ENCODE measurements at regions of chr14 and their contacts with region 1.

Region 1: DNA sequence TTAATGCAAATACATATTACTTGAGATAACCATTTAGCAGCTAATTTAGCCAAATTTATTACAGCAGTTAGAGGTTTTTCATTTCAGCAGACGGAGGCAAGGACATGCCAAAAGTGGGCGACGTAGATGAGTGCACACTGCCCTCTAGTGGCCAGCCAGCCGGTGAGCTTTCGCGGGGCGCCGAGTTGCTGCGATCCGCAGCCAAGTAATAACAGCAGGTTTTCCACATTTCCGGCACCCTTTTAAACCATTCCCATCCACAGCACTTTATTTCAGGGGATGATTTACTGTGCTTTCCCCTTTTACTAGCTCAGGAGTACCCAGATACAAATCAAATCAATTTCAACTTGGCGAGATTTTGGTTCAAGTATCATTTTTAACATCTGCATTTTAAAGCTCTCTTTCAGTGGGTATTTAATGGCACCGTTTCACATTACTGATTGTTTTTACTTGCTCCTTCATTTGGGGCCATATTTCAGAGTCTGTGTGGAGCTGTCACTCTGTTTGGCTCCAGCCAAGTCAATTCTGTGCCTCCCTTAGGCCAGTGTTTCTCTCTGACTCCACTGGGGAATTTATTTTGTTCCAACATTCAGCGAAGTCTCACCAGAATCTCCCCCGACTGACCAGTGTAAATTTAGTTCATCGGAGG is 158.0 kb downstream of the EGLN3 start:
- DNase-seq: peak; percentile 85
- ATAC-seq: peak; percentile 91
- H3K4me3 ChIP-seq: peak overlapping the region; percentile 55
- H3K27ac ChIP-seq: no peak overlapping the region
- H3K4me1 ChIP-seq: peaks cover 11% of the 10 kb centered on the region
- H3K27me3 ChIP-seq: no peaks in the 10 kb centered on the region
- CTCF ChIP-seq: peak; percentile 97

Region 2: DNA sequence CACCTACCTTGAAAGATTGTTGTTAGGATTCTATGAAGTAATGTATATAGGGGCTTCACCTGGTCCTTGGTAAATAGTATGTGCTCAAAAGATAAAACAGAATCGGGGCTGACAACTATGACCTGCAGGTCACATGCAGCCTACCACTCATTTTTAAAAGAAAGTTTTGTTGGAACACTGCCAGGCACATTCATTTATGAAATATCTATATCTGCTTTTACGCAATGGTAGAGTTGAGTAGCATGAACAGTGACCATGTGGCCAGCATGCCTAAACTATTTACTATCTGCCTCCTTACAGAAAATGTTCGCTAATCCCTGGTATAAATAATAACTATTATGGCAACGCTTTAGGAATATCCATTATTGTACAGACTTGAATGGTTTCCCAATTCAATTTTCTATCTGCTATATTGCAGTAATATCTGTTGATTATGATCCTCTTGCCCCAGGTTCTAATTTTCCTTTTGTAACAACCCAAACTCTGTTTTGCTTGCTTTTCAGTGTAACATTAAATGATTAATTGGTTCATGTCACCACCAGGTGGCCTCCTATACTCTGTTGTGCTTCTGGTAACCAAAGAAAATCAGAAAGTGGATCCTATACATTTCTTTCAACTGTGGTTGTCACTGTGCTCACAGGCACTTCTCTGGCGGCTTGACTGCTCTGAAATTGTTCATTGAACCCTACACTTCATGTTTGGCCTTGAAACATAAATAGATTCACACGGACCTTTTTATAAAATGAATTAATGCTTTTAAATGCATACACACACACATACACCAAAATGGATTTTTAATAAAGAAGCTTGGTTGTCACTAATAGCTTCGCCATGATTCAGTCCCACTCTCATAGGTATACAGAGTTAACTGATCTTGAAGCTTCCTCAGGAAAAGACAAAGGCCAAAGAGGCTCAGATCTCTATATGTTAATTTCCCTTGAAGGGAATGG is 1081.8 kb before region 1 on chr14:
- CTCF ChIA-PET with region 1: interaction called, 4 read pairs
- POLR2A ChIA-PET with region 1: no interaction called
- intact Hi-C with region 1: loop called (anchors 2 kb)
- DNase-seq: peak; percentile 73
- ATAC-seq: peak; percentile 87
- H3K4me3 ChIP-seq: no peak overlapping the region
- H3K27ac ChIP-seq: no peak overlapping the region
- H3K4me1 ChIP-seq: peaks cover 16% of the 10 kb centered on the region
- H3K27me3 ChIP-seq: no peaks in the 10 kb centered on the region
- CTCF ChIP-seq: peak; percentile 89

Region 3: DNA sequence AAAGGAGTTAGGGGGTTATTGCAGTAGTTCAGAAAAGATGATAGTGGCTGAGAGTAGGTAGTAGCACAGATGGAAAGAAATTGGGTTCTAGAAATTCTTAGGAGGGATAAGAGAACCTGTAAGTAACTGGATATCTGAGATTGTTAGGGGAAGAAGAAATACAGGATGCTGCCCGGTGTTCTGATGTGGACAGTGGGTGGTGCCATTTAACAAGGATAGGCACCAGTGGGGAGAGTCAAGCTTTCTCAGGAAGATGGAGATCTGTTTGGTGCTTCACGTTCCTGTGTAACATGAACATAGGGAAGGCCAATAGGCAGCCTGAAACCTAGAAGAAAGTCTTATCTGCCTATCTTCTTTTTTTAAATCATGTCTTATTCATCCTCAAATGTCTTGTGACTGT is 608.3 kb before region 1 on chr14:
- CTCF ChIA-PET with region 1: no interaction called
- POLR2A ChIA-PET with region 1: no interaction called
- intact Hi-C with region 1: loop called (anchors 1 kb)
- DNase-seq: peak; percentile 53
- ATAC-seq: peak; percentile 85
- H3K4me3 ChIP-seq: no peak overlapping the region
- H3K27ac ChIP-seq: no peak overlapping the region
- H3K4me1 ChIP-seq: no peaks in the 10 kb centered on the region
- H3K27me3 ChIP-seq: peaks cover 9% of the 10 kb centered on the region
- CTCF ChIP-seq: peak; percentile 61

Region 4: DNA sequence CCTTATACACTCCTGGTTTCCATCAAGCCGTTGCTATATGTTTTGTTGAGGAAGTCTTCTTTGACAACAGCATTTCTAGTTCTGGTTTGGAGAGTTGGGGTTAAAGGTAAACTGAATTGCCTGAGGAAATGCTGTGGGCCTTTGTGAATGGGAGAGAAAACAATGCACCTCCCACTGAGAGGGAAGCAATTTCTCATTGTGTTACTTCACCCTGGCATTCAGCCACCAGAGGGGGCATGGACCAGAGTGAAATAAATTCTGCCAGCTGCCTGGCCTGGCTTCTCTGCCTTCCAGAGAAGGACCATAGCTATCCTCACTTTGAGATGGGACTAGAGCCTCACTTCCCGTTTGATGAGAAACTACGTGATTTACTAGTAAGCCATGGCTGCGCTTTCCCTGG is 317.2 kb before region 1 on chr14:
- CTCF ChIA-PET with region 1: interaction called, 6 read pairs
- POLR2A ChIA-PET with region 1: no interaction called
- intact Hi-C with region 1: loop called (anchors 1 kb)
- DNase-seq: peak; percentile 77
- ATAC-seq: peak; percentile 60; the same call in 1 of the 2 replicates
- H3K4me3 ChIP-seq: no peak overlapping the region
- H3K27ac ChIP-seq: no peak overlapping the region
- H3K4me1 ChIP-seq: 0 out of 2 replicates have a peak, but pooled peaks cover 6% of the 10 kb centered on the region
- H3K27me3 ChIP-seq: no peaks in the 10 kb centered on the region
- CTCF ChIP-seq: peak; percentile 61

Region 5: GRCh38 chr14:33657476-33657875 is 135.4 kb before region 1 on chr14:
- CTCF ChIA-PET with region 1: no interaction called
- POLR2A ChIA-PET with region 1: no interaction called
- intact Hi-C with region 1: no loop called
- DNase-seq: peak; percentile 32
- ATAC-seq: peak; percentile 71
- H3K4me3 ChIP-seq: no peak overlapping the region
- H3K27ac ChIP-seq: no peak overlapping the region
- H3K4me1 ChIP-seq: peaks cover 25% of the 10 kb centered on the region
- H3K27me3 ChIP-seq: no peaks in the 10 kb centered on the region
- CTCF ChIP-seq: no peak

Region 6: DNA sequence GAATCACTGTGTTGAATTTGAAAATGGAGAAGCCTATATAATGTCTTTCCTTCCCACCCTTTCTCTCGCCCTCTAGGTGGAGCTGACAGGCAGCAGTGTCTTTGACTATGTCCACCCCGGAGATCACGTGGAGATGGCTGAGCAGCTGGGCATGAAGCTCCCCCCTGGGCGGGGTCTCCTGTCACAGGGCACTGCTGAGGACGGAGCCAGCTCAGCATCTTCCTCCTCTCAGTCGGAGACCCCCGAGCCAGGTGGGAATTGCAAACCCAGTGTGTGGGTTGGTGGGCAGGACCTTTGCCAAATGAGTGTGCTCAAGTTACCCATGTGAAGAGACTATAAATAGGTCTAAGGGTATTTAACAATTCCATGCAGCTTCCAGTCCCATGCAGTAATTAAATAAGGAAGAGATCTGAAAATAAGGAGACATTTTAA is 116.7 kb before region 1 on chr14:
- CTCF ChIA-PET with region 1: interaction called, 9 read pairs
- POLR2A ChIA-PET with region 1: interaction called, 3 read pairs
- intact Hi-C with region 1: loop called (anchors 1 kb)
- DNase-seq: peak; percentile 78
- ATAC-seq: peak; percentile 58
- H3K4me3 ChIP-seq: no peak overlapping the region
- H3K27ac ChIP-seq: no peak overlapping the region
- H3K4me1 ChIP-seq: peaks cover 47% of the 10 kb centered on the region
- H3K27me3 ChIP-seq: no peaks in the 10 kb centered on the region
- CTCF ChIP-seq: peak; percentile 87

Region 7: DNA sequence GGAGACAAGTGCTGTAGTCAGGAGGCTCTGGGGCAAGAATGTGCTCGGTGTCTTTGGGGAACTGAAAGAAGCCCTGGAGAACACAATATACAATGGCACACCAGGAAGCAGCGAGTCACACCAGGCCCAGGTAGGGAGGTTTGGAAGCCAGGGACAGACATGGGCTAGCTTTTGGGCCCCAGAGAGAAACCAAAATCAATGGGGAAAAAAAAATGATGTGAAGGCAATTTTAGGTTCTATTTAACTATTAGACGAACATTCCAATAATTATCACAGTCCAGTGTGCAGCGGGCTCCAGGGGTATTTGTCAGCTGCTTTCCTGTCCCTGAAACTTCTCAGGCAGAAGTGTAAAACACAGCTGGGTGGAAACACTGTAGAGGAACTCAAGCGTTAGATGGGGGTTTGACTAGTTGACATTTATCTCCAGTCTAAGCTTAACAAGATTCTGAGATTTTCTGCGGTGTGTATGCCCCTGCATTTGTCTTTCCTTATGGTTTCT is 179.8 kb after region 1 on chr14:
- CTCF ChIA-PET with region 1: no interaction called
- POLR2A ChIA-PET with region 1: no interaction called
- intact Hi-C with region 1: no loop called
- DNase-seq: no peak
- ATAC-seq: no peak
- H3K4me3 ChIP-seq: no peak overlapping the region
- H3K27ac ChIP-seq: no peak overlapping the region
- H3K4me1 ChIP-seq: no peaks in the 10 kb centered on the region
- H3K27me3 ChIP-seq: peaks cover 59% of the 10 kb centered on the region
- CTCF ChIP-seq: no peak

Measured in PC-3 (cell line).